ENCODE measurements at regions of chr7 and their contacts with region 1.

Region 1: DNA sequence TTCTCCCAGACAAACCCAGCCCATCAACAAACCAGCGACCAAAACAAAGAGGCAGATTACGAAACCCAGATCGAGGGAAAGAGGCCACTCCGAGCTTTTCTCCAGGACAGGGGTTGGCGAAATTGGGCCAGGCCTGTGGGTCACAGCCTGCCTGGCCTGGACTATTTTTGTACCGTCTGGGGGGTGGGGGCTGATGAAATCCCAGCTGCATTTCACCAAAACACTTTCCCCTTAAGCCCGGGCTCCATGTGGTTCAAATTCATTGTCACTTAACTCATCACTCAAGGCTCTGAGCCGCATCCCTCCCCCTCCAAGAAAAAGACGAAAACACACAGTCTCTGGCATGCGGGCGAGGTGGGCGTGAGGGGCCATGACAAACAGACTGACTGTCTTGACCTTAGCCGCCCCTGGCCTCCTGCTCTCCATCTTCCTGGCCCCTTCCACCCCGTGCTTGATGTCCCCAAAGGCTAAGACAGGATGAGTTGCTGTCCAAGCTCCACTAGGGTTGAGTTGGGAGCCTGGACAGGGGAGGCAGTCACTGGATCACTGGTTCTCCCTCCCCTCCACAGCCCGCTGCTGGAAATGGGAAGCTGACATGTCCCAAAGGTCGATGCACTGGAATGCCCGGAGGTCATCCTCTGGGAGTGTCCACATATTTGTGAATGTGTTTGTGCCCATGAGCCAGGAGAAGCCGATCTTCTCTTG is 19.2 kb downstream of the TMEM270 start:
- DNase-seq: no peak
- ATAC-seq: peak; percentile 84

Region 2: DNA sequence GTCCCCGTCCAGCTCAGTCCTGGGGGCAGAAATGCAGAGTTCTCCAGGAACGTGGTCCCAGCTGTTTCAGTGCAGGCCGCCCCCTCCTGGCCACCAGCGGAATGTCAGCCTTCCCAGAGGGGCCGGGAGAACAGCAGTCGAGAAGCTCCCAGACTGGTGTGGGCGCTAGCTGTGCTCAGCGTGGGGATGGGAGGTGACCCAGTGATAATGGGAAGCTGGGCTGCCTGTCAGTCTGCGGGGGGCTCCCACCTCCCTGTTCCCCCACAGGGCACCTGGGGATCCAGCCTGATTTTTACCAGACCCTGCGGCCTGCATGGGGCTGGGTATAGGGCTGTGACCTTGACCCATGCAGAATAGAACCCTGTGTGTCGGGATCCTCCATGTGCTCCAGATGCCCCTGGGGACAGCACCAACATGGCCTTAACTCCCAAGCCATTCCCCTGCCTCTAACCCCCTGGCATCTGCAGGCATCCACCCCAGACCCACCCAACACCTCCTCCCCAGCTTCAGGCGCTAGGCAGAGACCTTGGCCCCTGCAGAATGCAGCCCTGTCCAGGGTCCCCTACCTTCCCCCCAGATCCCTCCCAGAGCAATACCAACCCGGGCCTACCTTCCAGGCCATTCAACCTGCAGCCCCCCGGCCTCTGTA is 146.9 kb after region 1 on chr7:
- intact Hi-C with region 1: loop called (anchors 5 kb)
- DNase-seq: peak; percentile 90
- ATAC-seq: peak; percentile 63

Measured in Right ventricle myocardium inferior (tissue), 1 donor.